Adrenal gland (tissue), 19 donors: ENCODE measurements at regions of chr2 and their contacts with region 1.

Region 1: DNA sequence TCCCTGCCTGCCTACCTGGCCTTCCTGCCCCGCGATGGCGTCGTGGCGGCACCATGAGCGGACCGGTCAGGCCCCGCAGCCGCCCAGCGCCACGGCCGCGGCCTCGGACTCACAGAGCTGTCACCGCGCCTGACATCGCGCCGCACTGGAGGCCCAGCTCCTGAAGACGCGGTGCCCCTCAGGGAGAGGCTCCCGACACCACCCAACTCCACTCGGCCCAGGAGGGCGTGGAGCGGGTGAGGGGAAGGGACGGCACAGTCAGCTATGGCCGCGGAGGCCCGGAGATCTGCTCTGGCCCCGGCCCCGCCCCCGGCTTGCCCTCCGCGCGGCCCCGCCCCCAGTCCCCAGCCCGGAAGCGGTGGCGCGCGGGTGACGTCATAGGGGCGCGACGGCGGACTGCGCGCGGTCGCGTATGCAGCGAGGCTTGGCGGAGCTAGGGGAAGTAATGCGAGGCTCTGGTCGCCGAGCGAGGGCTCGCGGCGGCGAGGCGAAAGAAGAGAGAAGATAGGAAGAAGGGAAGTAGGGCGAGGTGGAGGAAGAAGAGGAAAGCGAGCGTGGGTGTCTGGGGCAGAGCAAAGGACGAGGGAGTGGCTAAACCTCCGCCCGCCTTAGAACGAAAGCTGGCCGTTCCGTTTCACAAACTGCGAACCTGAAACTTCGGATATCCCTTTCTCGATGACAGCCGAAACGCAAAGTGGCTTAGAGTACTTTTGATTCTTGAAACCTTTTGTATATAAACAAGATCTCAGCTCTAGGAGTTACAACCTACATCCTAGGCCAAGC is at the start of gene SLC35F5:
- DNase-seq: peak; percentile 91 to 96 (median 93)
- H3K4me3 ChIP-seq: peak within 1 kb of the TSS; percentile 87 to 96 (median 93)
- H3K27ac ChIP-seq: peak within 1 kb of the TSS; percentile 92 to 99 (median 96)
- H3K4me1 ChIP-seq: peaks cover 0 to 34% of the 10 kb centered on the region in 2 donors
- H3K27me3 ChIP-seq: no peaks in the 10 kb centered on the region
- CTCF ChIP-seq: no peak
- POLR2A ChIP-seq: peak; percentile 83 to 97
- total RNA-seq, gene SLC35F5: 124 to 466 (median 231) TPM

Region 2: DNA sequence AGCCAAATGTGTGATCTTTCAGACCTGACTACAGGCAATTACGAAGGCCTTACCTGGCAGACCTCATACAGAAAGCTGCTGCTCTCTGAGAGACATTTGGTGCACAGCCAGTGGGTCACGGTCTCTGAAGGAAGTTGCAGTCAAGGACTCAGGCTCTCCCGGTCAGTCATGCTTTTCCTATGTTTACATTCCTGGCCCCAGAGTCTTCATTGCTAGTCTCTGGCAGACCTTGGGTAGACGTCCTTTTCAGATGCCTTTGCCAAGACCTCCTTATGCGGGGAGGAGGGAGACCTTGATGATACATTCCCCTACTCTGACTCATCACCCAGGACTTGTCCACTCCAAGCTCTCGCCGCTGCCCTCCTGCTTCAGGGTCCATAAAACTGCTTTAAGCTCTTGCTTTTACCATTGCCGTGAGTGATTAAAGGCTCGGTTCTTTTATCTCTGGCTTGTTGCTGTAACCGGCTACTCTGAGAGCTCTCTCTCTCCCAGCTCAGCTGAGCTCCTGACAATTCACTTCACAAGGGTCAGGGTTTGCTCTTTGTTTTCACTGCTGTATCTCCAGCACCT is 61.9 kb after region 1 on chr2:
- intact Hi-C with region 1: loop called in 1 of 2 experiments (anchors 10 kb)
- DNase-seq: peak; percentile 73 to 96 (median 95)
- H3K4me3 ChIP-seq: no peak overlapping the region
- H3K27ac ChIP-seq: peak overlapping the region; percentile 13 to 77 (median 67)
- H3K4me1 ChIP-seq: peaks cover 16 to 25% of the 10 kb centered on the region in 2 donors
- H3K27me3 ChIP-seq: no peaks in the 10 kb centered on the region
- CTCF ChIP-seq: no peak
- POLR2A ChIP-seq: peak in 1 of 2 donors; percentile 84

Region 3: GRCh38 chr2:113889471-113890252 is 133.1 kb after region 1 on chr2 and contains the start of gene ACTR3:
- intact Hi-C with region 1: loop called in 1 of 2 experiments (anchors 10 kb)
- DNase-seq: peak; percentile 98 to 99 (median 98)
- H3K4me3 ChIP-seq: peak within 1 kb of the TSS; percentile 80 to 97 (median 94)
- H3K27ac ChIP-seq: peak within 1 kb of the TSS; percentile 80 to 99 (median 97)
- H3K4me1 ChIP-seq: peaks cover 30 to 70% of the 10 kb centered on the region in 2 donors
- H3K27me3 ChIP-seq: no peaks in the 10 kb centered on the region
- CTCF ChIP-seq: no peak
- POLR2A ChIP-seq: peak; percentile 92 to 97
- total RNA-seq, gene ACTR3: 103 to 530 (median 232) TPM